CD4-positive, alpha-beta memory T cell (primary cell): ENCODE measurements at regions of chr19 and their contacts with region 1.

Region 1: DNA sequence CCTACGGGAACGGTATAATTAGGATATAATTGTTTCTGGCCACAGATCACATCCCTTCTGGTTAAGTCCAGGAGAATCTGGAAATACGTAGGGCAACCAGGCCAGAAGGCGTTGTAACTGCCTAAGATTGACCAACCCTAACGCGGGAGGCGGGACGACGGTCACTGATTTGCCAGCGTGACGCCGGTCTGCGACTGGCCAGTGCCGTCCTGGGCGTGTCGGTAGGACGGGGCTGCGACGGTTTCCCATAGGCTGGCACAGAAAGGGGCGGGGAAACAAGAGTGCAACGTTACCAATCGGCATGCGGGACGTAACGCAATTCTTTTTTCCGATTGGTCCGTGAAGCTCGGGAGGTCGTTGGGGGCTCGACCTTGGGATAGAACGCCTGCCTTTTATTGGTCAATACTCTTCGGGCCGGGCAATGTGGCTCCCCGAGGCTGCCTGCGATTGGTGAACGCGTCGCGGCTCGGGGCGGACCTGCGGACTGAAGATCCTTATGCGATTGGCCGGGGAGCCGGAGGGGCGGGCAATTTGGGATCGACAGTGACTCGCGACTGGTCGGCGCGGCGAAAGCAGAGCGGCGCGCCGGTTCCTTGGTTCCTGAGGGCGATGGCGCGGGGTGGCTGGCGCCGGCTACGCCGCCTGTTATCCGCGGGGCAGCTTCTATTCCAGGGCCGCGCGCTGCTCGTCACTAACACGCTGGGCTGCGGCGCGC is at the start of gene MPV17L2:
- DNase-seq: peak; percentile 98 to 100 (median 99)
- H3K4me3 ChIP-seq: peak within 1 kb of the TSS; percentile 63 to 83
- H3K4me3 Mint-ChIP-seq: peak within 1 kb of the TSS; percentile 87 to 96 (median 92)
- H3K27ac ChIP-seq: peak within 1 kb of the TSS; percentile 73
- H3K27ac Mint-ChIP-seq: peak within 1 kb of the TSS; percentile 89 to 98 (median 96)
- H3K4me1 ChIP-seq: peaks cover 22% of the 10 kb centered on the region
- H3K4me1 Mint-ChIP-seq: peaks cover 11 to 26% (median 20%) of the 10 kb centered on the region in 4 donors
- H3K27me3 ChIP-seq: no peaks in the 10 kb centered on the region
- H3K27me3 Mint-ChIP-seq: no peaks in the 10 kb centered on the region
- total RNA-seq, gene MPV17L2: 7.6 to 7.8 TPM

Region 2: DNA sequence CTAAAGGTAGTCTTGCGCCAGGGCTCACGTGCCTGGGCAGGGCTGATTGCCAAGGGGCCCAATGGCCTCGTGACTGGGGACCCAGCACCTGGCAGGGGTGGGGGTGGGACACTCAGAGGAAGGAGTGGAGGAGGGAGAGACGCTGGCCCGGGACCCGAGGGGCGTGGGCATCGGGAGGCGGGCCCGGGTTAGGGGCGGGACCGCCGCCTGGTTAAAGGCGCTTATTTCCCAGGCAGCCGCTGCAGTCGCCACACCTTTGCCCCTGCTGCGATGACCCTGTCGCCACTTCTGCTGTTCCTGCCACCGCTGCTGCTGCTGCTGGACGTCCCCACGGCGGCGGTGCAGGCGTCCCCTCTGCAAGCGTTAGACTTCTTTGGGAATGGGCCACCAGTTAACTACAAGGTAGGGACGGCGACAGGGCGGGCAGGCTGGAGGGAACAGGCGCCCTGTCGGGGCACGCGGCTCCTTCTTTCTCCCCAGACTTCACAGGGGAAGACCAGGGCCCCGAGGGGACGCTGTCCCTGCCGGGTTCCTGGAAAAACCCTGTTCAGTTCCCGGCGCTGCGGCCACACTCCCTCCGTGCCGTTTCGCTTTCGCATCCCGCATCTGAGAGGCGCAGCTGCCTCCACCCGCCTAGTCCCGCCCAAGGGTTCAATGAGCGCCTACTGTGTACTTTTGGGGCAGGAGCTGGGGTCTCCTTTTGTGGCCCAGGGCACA is 19.1 kb before region 1 on chr19 and contains the start of gene IFI30:
- CTCF ChIA-PET with region 1: no interaction called
- POLR2A ChIA-PET with region 1: interaction called, 10 read pairs
- intact Hi-C with region 1: loop called (anchors 2 kb)
- DNase-seq: peak; percentile 45 to 56 (median 51)
- H3K4me3 ChIP-seq: peak within 1 kb of the TSS; percentile 73 to 77
- H3K4me3 Mint-ChIP-seq: peak within 1 kb of the TSS; percentile 88 to 96 (median 91)
- H3K27ac ChIP-seq: peak within 1 kb of the TSS; percentile 62
- H3K27ac Mint-ChIP-seq: peak within 1 kb of the TSS; percentile 64 to 93 (median 85)
- H3K4me1 ChIP-seq: peaks cover 18% of the 10 kb centered on the region
- H3K4me1 Mint-ChIP-seq: peaks cover 3 to 20% (median 9%) of the 10 kb centered on the region in 4 donors
- H3K27me3 ChIP-seq: no peaks in the 10 kb centered on the region
- H3K27me3 Mint-ChIP-seq: no peaks in the 10 kb centered on the region
- total RNA-seq, gene IFI30: 48.3 to 56.9 TPM

Region 3: GRCh38 chr19:18322759-18323460 is 130.1 kb after region 1 on chr19 and contains the start of gene LSM4:
- CTCF ChIA-PET with region 1: interaction called, 4 read pairs
- POLR2A ChIA-PET with region 1: interaction called, 5 read pairs
- intact Hi-C with region 1: loop called (anchors 1 kb)
- DNase-seq: peak; percentile 99 to 100 (median 99)
- H3K4me3 ChIP-seq: peak within 1 kb of the TSS; percentile 61 to 81
- H3K4me3 Mint-ChIP-seq: peak within 1 kb of the TSS; percentile 75 to 88 (median 86)
- H3K27ac ChIP-seq: peak within 1 kb of the TSS; percentile 68
- H3K27ac Mint-ChIP-seq: peak within 1 kb of the TSS; percentile 86 to 98 (median 97)
- H3K4me1 ChIP-seq: peaks cover 59% of the 10 kb centered on the region
- H3K4me1 Mint-ChIP-seq: peaks cover 32 to 59% (median 45%) of the 10 kb centered on the region in 4 donors
- H3K27me3 ChIP-seq: no peaks in the 10 kb centered on the region
- H3K27me3 Mint-ChIP-seq: no peaks in the 10 kb centered on the region
- total RNA-seq, gene LSM4: 64.2 to 65.0 TPM